ENCODE measurements at regions of chr12 and their contacts with region 1.

Region 1: GRCh38 chr12:6533923-6534694 is at the start of gene GAPDH:
- DNase-seq: peak; percentile 80
- ATAC-seq: peak; percentile 76
- H3K4me3 ChIP-seq: peak within 1 kb of the TSS; percentile 83
- H3K27ac ChIP-seq: peak within 1 kb of the TSS; percentile 98
- H3K4me1 ChIP-seq: peaks cover 29% of the 10 kb centered on the region
- H3K27me3 ChIP-seq: no peaks in the 10 kb centered on the region
- CTCF ChIP-seq: no peak
- EP300 ChIP-seq: peak in 1 of 2 experiments; percentile 50; a peak in 1 of 4 replicates
- POLR2A ChIP-seq: peak; percentile 96
- RAD21 ChIP-seq: no peak
- polyA plus RNA-seq, gene GAPDH: 9,323 to 11,518 TPM

Region 2: DNA sequence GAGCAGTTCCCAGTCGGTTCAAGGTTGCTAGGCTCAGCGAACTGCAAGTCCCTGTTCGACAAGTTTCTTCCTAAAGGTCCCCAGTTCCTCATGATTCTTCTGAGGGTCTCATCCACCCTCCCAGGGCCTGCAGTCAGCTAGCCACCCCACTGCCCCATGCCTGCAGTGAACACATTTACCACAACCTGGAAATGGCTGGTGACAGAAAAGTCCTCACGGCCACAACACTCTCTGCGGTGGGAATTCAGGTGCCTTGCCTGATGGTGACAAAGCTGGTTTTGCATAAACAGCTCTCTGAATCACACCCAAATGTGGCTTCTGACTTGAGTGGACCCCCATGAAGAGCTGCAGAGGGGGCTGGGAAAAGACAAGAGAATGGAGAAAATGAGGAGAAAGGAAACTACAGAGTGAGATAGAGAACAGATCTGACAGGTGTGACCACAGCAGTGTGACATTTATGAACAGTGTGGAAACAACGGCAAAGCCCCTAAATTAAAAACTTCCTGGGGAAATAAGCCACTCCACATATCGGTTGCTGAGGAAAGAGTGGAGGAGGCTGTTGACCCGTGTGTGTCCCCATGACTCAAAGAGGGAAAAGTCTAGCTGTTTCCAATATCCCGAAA is 90.6 kb before region 1 on chr12:
- CTCF ChIA-PET with region 1: interaction called, 9 read pairs
- POLR2A ChIA-PET with region 1: interaction called, 11 read pairs
- RAD21 ChIA-PET with region 1: interaction called, 5 read pairs
- SMC1A ChIA-PET with region 1: interaction called, 7 read pairs
- in situ Hi-C with region 1: no loop called
- intact Hi-C with region 1: no loop called
- DNase-seq: no peak
- ATAC-seq: peak; percentile 47
- H3K4me3 ChIP-seq: peak overlapping the region; percentile 66
- H3K27ac ChIP-seq: peak overlapping the region; percentile 99
- H3K4me1 ChIP-seq: peaks cover 46% of the 10 kb centered on the region
- H3K27me3 ChIP-seq: no peaks in the 10 kb centered on the region
- CTCF ChIP-seq: no peak
- EP300 ChIP-seq: peak in 1 of 2 experiments; percentile 75; a peak in 2 of 4 replicates
- POLR2A ChIP-seq: peak; percentile 68
- RAD21 ChIP-seq: no peak

Region 3: GRCh38 chr12:6493497-6494257 is 40.4 kb before region 1 on chr12 and contains the start of gene NCAPD2:
- CTCF ChIA-PET with region 1: interaction called, 15 read pairs
- POLR2A ChIA-PET with region 1: interaction called, 11 read pairs
- RAD21 ChIA-PET with region 1: interaction called, 9 read pairs
- SMC1A ChIA-PET with region 1: interaction called, 7 read pairs
- in situ Hi-C with region 1: loop called (anchors 5 kb)
- intact Hi-C with region 1: loop called (anchors 5 kb)
- DNase-seq: peak; percentile 88
- ATAC-seq: peak; percentile 94
- H3K4me3 ChIP-seq: peak within 1 kb of the TSS; percentile 93
- H3K27ac ChIP-seq: peak within 1 kb of the TSS; percentile 97
- H3K4me1 ChIP-seq: peaks cover 6% of the 10 kb centered on the region; the same call in 1 of the 2 replicates
- H3K27me3 ChIP-seq: no peaks in the 10 kb centered on the region
- CTCF ChIP-seq: peak in 2 of 3 experiments; percentile 2 to 25; a peak in 1 of 6 replicates
- EP300 ChIP-seq: no peak
- POLR2A ChIP-seq: peak; percentile 81
- RAD21 ChIP-seq: no peak
- polyA plus RNA-seq, gene NCAPD2: 24.2 to 32.8 TPM

Region 4: DNA sequence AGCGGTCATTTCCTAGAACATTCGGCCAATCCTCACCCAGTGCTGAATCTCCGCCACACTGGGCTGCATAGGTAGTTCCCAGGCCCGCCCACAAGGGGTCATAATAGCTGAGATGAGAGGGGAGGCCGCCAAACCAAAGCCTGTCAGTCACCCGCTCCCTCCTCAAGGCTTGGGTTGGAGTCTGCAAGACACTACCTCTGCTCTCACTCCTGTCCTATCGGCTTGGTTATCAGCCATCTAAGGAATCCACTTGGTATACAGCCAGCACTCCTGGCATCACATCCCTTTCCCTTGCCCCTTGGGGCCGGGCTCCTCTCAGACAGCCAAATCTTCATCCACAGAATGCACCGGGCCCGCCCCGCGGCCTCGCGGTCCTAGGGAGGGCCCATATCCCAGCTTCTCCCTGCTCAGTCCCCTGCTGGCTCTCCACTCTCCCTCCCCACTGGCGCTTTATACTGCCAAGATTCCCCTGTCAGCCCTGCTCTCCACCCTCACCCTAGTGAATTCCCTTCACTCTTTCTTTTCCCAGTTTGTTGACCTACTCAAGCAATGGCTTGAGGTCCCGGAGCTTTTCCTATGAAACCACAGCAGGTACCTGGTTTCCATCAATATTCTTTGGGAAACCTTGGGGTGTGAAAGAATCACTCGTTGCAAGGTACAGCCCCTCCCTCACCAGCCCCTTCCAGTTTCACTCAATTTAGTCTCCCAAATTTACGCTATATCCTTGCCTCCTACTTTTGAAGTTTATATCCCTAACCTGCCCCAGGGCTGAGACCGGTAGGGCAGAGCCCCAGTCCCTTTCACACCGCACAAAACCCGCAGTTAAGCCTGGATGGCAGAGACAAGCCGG is 20.3 kb after region 1 on chr12:
- CTCF ChIA-PET with region 1: interaction called, 69 read pairs
- POLR2A ChIA-PET with region 1: interaction called, 32 read pairs
- RAD21 ChIA-PET with region 1: interaction called, 18 read pairs
- SMC1A ChIA-PET with region 1: interaction called, 14 read pairs
- in situ Hi-C with region 1: no loop called
- intact Hi-C with region 1: no loop called
- DNase-seq: no peak
- ATAC-seq: peak; percentile 83
- H3K4me3 ChIP-seq: peak overlapping the region; percentile 89
- H3K27ac ChIP-seq: peak overlapping the region; percentile 27
- H3K4me1 ChIP-seq: peaks cover 10% of the 10 kb centered on the region
- H3K27me3 ChIP-seq: no peaks in the 10 kb centered on the region
- CTCF ChIP-seq: peak; percentile 80 to 85 (median 84)
- EP300 ChIP-seq: no peak
- POLR2A ChIP-seq: no peak
- RAD21 ChIP-seq: peak; percentile 48

Measured in GM12878 (cell line).